ENCODE measurements at regions of chr4 and their contacts with region 1.

Region 1: GRCh38 chr4:176195184-176195978 is at the start of gene SPATA4:
- DNase-seq: peak; percentile 89 to 94 (median 91)
- H3K4me3 ChIP-seq: peak within 1 kb of the TSS; percentile 66 to 68
- H3K4me3 Mint-ChIP-seq: peak within 1 kb of the TSS; percentile 86 to 96 (median 90)
- H3K27ac ChIP-seq: no peak within 1 kb of the TSS
- H3K27ac Mint-ChIP-seq: peak within 1 kb of the TSS; percentile 82 to 95 (median 90)
- H3K4me1 ChIP-seq: peaks cover 13% of the 10 kb centered on the region
- H3K4me1 Mint-ChIP-seq: peaks cover 5 to 12% (median 10%) of the 10 kb centered on the region in 4 donors
- H3K27me3 ChIP-seq: peaks cover 10% of the 10 kb centered on the region
- H3K27me3 Mint-ChIP-seq: peaks cover 19 to 29% of the 10 kb centered on the region in 2 donors
- total RNA-seq, gene SPATA4: not detected

Region 2: DNA sequence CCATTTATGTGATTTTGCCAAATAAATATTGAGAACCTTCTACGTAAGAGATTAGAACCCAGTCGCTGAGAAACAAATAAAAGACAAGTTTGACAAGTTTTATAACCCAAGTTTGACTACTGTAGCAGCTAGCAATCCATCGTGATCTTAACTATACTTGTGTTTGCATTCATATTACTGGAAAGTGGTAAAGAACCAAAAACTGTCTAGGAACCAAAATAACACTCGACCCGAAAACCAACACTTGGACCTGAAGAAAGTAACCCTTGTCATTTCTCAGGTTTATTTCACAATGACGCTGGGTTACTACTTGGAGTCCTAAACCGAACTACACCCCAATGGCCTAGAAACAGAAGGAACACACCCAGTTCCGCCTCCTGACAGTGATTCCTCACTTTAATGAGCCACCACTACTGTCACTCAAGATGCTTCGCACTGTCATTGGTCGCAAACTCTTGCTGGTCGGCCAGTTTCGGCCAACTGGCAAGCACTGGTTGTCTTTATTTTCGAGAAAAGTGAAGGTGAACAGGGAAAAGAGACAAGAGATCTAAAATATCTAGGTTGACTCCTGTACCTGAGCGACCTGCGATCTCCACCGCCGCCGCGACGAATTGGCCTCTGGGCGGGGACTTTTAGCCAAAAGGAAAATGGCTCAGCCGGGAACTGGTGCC is 1912.4 kb before region 1 on chr4:
- CTCF ChIA-PET with region 1: no interaction called
- POLR2A ChIA-PET with region 1: no interaction called
- intact Hi-C with region 1: loop called (anchors 1 kb)
- DNase-seq: peak; percentile 84 to 92 (median 86)
- H3K4me3 ChIP-seq: peak overlapping the region; percentile 71 to 92
- H3K4me3 Mint-ChIP-seq: peak overlapping the region; percentile 96 to 100 (median 99)
- H3K27ac ChIP-seq: peak overlapping the region; percentile 97
- H3K27ac Mint-ChIP-seq: peak overlapping the region; percentile 98 to 100 (median 100)
- H3K4me1 ChIP-seq: peaks cover 59% of the 10 kb centered on the region
- H3K4me1 Mint-ChIP-seq: peaks cover 44 to 80% (median 61%) of the 10 kb centered on the region in 4 donors
- H3K27me3 ChIP-seq: no peaks in the 10 kb centered on the region
- H3K27me3 Mint-ChIP-seq: no peaks in the 10 kb centered on the region

Region 3: DNA sequence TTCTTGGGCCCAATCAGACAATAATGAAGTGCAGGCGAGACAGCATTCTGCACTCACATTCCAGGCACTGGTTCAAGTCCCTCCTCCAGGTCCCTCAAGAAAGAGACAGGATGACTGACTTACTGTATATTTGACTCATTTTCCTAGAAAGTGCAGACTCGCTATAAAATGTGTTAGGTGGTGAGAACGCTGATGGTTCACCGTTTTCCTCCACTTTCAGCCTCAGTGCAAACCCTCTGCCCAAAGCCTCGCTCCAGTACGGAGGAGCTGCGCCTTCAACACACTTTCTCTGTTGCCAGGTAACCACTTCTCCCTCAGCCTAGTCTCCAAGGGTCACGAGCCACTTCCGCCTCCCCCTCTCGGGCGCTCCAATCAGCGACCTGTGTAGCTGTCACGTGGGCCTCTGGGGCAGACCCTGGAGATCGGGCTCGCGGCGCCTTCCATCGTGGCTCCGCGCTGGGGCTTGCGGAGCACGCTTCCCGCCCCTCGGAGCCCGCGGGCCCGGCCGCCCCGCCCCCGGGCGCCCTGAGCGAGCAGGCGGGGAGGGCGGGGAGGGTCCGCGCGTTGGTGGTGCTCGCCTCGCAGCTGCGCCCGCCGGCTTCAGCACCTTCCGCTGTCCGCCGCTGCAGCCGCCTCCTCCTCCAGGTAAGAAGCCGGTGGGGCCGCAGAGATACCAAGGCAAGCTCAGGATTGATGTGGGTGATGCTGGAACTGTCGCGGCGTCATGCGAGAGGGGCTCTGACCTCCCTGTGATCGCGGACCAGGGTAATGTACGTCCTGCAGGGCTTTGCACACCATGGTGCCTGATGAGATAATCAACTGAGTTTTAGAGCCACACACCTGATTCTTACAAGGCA is 129.7 kb before region 1 on chr4 and contains the start of gene WDR17:
- CTCF ChIA-PET with region 1: no interaction called
- POLR2A ChIA-PET with region 1: no interaction called
- intact Hi-C with region 1: loop called (anchors 2 kb)
- DNase-seq: peak; percentile 53 to 66 (median 59)
- H3K4me3 ChIP-seq: peak within 1 kb of the TSS in 1 of 2 donors; percentile 51
- H3K4me3 Mint-ChIP-seq: peak within 1 kb of the TSS; percentile 82 to 92 (median 88)
- H3K27ac ChIP-seq: no peak within 1 kb of the TSS
- H3K27ac Mint-ChIP-seq: peak within 1 kb of the TSS in 2 of 7 donors; percentile 62 to 66
- H3K4me1 ChIP-seq: peaks cover 9% of the 10 kb centered on the region
- H3K4me1 Mint-ChIP-seq: peaks cover 8 to 13% (median 11%) of the 10 kb centered on the region in 4 donors
- H3K27me3 ChIP-seq: no peaks in the 10 kb centered on the region
- H3K27me3 Mint-ChIP-seq: peaks cover 12% of the 10 kb centered on the region in 2 donors
- total RNA-seq, gene WDR17: 0.26 to 0.42 TPM

Region 4: GRCh38 chr4:176277162-176277904 is 82.0 kb after region 1 on chr4:
- CTCF ChIA-PET with region 1: no interaction called
- POLR2A ChIA-PET with region 1: no interaction called
- intact Hi-C with region 1: no loop called
- DNase-seq: peak in 1 of 5 donors; percentile 0
- H3K4me3 ChIP-seq: no peak overlapping the region
- H3K4me3 Mint-ChIP-seq: no peak overlapping the region
- H3K27ac ChIP-seq: no peak overlapping the region
- H3K27ac Mint-ChIP-seq: no peak overlapping the region
- H3K4me1 ChIP-seq: no peaks in the 10 kb centered on the region
- H3K4me1 Mint-ChIP-seq: no peaks in the 10 kb centered on the region
- H3K27me3 ChIP-seq: no peaks in the 10 kb centered on the region
- H3K27me3 Mint-ChIP-seq: peaks cover 6 to 14% of the 10 kb centered on the region in 2 donors

Region 5: GRCh38 chr4:176319704-176320339 is 124.4 kb after region 1 on chr4 and contains the start of gene SPCS3:
- CTCF ChIA-PET with region 1: interaction called, 4 read pairs
- POLR2A ChIA-PET with region 1: interaction called, 20 read pairs
- intact Hi-C with region 1: loop called (anchors 1 kb)
- DNase-seq: peak; percentile 92 to 95 (median 94)
- H3K4me3 ChIP-seq: peak within 1 kb of the TSS; percentile 40 to 59
- H3K4me3 Mint-ChIP-seq: peak within 1 kb of the TSS; percentile 93 to 98 (median 95)
- H3K27ac ChIP-seq: peak within 1 kb of the TSS; percentile 95
- H3K27ac Mint-ChIP-seq: peak within 1 kb of the TSS; percentile 95 to 98 (median 96)
- H3K4me1 ChIP-seq: peaks cover 49% of the 10 kb centered on the region
- H3K4me1 Mint-ChIP-seq: peaks cover 29 to 60% (median 40%) of the 10 kb centered on the region in 4 donors
- H3K27me3 ChIP-seq: no peaks in the 10 kb centered on the region
- H3K27me3 Mint-ChIP-seq: no peaks in the 10 kb centered on the region
- total RNA-seq, gene SPCS3: 193 to 207 TPM

Region 6: GRCh38 chr4:176883681-176884418 is 688.5 kb after region 1 on chr4:
- CTCF ChIA-PET with region 1: no interaction called
- POLR2A ChIA-PET with region 1: no interaction called
- intact Hi-C with region 1: no loop called
- DNase-seq: no peak
- H3K4me3 ChIP-seq: no peak overlapping the region
- H3K4me3 Mint-ChIP-seq: no peak overlapping the region
- H3K27ac ChIP-seq: no peak overlapping the region
- H3K27ac Mint-ChIP-seq: no peak overlapping the region
- H3K4me1 ChIP-seq: no peaks in the 10 kb centered on the region
- H3K4me1 Mint-ChIP-seq: no peaks in the 10 kb centered on the region
- H3K27me3 ChIP-seq: no peaks in the 10 kb centered on the region
- H3K27me3 Mint-ChIP-seq: no peaks in the 10 kb centered on the region

Region 7: DNA sequence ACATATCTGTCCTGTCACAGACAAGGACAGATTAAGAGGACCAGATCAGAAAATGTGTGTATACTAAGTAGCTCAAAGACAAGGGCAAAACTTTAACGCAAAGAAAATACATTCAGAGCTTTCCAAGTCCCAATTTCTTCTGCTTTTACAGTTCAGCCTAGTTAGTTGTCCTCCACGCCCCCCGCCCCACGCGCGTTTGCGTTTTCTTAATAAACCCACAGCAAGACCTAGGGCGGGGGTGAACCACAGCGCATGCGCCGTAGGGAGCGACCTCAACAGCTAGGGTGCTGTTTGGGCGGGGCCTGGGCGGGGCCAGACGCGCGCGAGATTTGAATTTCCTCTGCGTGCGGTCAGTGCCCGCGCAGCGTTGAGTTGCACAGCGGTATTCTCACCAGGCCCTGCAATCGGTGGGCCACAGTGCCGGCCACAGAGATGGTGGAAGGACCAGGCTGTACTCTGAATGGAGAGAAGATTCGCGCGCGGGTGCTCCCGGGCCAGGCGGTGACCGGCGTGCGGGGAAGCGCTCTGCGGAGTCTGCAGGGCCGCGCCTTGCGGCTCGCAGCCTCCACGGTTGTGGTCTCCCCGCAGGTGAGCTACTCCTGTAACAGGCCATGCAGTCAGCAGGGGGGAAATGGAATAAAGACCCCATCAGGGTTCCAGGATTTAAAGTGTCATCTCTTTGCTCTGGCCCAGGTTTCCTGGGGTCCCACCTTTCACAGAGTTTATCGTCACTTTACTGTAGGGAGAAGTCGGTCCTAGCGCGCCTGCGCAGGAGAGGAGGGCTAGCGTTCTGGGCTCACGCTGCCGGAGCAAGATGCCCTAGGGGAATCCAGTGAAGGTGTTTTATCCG is 1114.4 kb after region 1 on chr4 and contains the start of gene NEIL3:
- CTCF ChIA-PET with region 1: no interaction called
- POLR2A ChIA-PET with region 1: no interaction called
- intact Hi-C with region 1: loop called (anchors 5 kb)
- DNase-seq: peak; percentile 91 to 94 (median 91)
- H3K4me3 ChIP-seq: peak within 1 kb of the TSS; percentile 64 to 92
- H3K4me3 Mint-ChIP-seq: peak within 1 kb of the TSS; percentile 86 to 96 (median 91)
- H3K27ac ChIP-seq: peak within 1 kb of the TSS; percentile 51
- H3K27ac Mint-ChIP-seq: peak within 1 kb of the TSS; percentile 67 to 93 (median 88)
- H3K4me1 ChIP-seq: peaks cover 35% of the 10 kb centered on the region
- H3K4me1 Mint-ChIP-seq: peaks cover 15 to 41% (median 22%) of the 10 kb centered on the region in 4 donors
- H3K27me3 ChIP-seq: no peaks in the 10 kb centered on the region
- H3K27me3 Mint-ChIP-seq: no peaks in the 10 kb centered on the region
- total RNA-seq, gene NEIL3: 0.15 to 0.17 TPM